Activated B cell treated with CpG ODN at 0.5 μM for 24 hours (primary cell): ENCODE measurements at regions of chr2 and their contacts with region 1.

Region 1: GRCh38 chr2:219177552-219178376 is at the start of gene RETREG2:
- DNase-seq: peak; percentile 78
- ATAC-seq: peak; percentile 45
- H3K4me3 Mint-ChIP-seq: peak within 1 kb of the TSS; percentile 96
- H3K27ac Mint-ChIP-seq: peak within 1 kb of the TSS; percentile 99
- H3K4me1 Mint-ChIP-seq: peaks cover 40% of the 10 kb centered on the region
- H3K27me3 Mint-ChIP-seq: no peaks in the 10 kb centered on the region
- CTCF ChIP-seq: no peak
- total RNA-seq, gene RETREG2: 60.5 and 78.6 TPM in 2 replicates

Region 2: DNA sequence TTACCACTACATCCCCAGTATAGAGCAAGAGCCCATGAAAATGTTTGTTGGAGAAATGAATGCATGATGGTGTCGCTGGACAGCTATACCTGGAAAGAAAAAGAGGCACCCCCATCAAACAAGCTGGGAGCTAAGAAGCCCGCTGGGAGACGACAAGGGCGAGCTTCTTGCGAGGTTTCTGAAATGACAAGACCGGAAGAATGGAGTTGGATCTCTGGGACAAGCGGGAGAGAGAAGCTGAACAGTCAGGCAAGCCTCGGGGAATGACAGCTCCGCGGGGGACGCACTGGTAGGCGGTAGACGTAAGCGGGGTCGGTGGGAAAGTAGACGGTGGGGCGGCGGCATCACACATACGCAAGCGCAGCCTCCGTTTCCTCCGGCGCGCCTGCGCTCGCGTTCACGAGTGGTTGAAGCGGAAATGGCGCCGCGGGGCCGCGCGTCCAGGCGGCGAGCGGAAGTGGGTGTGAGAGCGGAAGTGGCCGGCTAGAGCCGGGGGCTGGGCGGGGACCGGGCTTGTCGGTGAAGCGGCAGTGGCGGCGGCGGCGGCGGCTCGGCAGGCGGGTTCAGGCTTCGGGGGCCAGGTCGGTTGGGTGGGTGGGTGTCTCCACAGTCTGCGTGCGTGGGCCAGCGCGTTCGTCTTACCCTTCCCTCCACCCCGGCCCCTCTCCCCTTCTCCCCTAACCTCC is 960.9 kb before region 1 on chr2 and contains the start of gene ARPC2:
- CTCF ChIA-PET with region 1: no interaction called
- POLR2A ChIA-PET with region 1: interaction called, 4 read pairs
- intact Hi-C with region 1: loop called (anchors 5 kb)
- DNase-seq: peak; percentile 95
- ATAC-seq: peak; percentile 63
- H3K4me3 Mint-ChIP-seq: peak within 1 kb of the TSS; percentile 98
- H3K27ac Mint-ChIP-seq: peak within 1 kb of the TSS; percentile 99
- H3K4me1 Mint-ChIP-seq: peaks cover 45% of the 10 kb centered on the region
- H3K27me3 Mint-ChIP-seq: no peaks in the 10 kb centered on the region
- CTCF ChIP-seq: no peak
- total RNA-seq, gene ARPC2: 711 and 737 TPM in 2 replicates

Region 3: GRCh38 chr2:218659258-218659987 is 518.3 kb before region 1 on chr2 and contains the starts of genes BCS1L and ZNF142:
- CTCF ChIA-PET with region 1: no interaction called
- POLR2A ChIA-PET with region 1: no interaction called
- intact Hi-C with region 1: loop called (anchors 5 kb)
- DNase-seq: peak; percentile 85
- ATAC-seq: peak; percentile 96
- H3K4me3 Mint-ChIP-seq: peak within 1 kb of the TSS; percentile 99
- H3K27ac Mint-ChIP-seq: peak within 1 kb of the TSS; percentile 93
- H3K4me1 Mint-ChIP-seq: peaks cover 31% of the 10 kb centered on the region
- H3K27me3 Mint-ChIP-seq: no peaks in the 10 kb centered on the region
- CTCF ChIP-seq: no peak
- total RNA-seq, gene BCS1L: 66.9 and 75.1 TPM in 2 replicates
- total RNA-seq, gene ZNF142: 44.9 and 63.6 TPM in 2 replicates

Region 4: DNA sequence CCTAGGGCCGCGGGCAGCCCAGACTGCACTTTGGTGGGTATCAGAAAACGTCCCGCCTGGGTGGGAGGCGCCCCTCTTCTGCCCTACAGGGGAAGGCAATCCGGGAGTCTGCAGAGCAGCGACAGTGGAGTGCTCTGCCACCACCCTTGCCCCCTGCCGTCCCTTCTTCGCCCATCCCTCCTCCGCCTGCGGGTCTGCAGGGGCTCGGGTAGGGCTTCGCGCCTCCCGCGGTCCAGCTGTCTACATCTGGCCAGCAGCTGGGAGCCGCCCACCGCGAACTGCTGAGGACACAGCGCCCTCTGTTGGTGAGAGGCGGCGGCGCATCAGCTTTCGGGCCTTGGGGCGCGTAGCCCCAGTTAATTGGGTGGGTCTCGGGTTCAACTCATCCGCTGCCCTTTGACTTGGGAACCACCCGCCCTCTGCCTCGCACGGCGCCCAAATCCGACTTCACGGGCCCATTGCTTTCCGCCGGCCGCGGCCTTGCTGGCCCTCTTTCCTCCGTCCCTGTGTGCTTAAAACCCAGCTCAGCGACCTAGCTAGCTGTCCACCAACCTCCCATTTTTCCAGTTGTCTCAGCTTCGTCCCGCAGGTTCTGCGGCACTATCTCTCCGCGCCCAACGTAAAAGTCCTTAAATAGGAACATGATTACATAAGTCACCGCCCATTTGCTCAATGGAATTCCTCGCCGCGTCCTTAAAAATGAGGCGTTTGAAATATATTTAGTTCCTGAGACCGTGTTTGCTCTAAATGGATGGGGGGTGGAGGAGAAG is 279.5 kb before region 1 on chr2:
- CTCF ChIA-PET with region 1: no interaction called
- POLR2A ChIA-PET with region 1: interaction called, 9 read pairs
- intact Hi-C with region 1: loop called (anchors 1 kb)
- DNase-seq: peak; percentile 88
- ATAC-seq: peak; percentile 22
- H3K4me3 Mint-ChIP-seq: peak overlapping the region; percentile 85
- H3K27ac Mint-ChIP-seq: peak overlapping the region; percentile 84
- H3K4me1 Mint-ChIP-seq: peaks cover 47% of the 10 kb centered on the region
- H3K27me3 Mint-ChIP-seq: peaks cover 22% of the 10 kb centered on the region
- CTCF ChIP-seq: peak; percentile 97

Region 5: GRCh38 chr2:219229305-219230058 is 51.7 kb after region 1 on chr2 and contains the starts of genes ANKZF1 and ATG9A:
- CTCF ChIA-PET with region 1: interaction called, 3 read pairs
- POLR2A ChIA-PET with region 1: interaction called, 32 read pairs
- intact Hi-C with region 1: loop called (anchors 1 kb)
- DNase-seq: peak; percentile 90
- ATAC-seq: peak; percentile 97
- H3K4me3 Mint-ChIP-seq: peak within 1 kb of the TSS; percentile 96
- H3K27ac Mint-ChIP-seq: peak within 1 kb of the TSS; percentile 95
- H3K4me1 Mint-ChIP-seq: peaks cover 43% of the 10 kb centered on the region
- H3K27me3 Mint-ChIP-seq: no peaks in the 10 kb centered on the region
- CTCF ChIP-seq: no peak
- total RNA-seq, gene ANKZF1: 96.0 and 105 TPM in 2 replicates
- total RNA-seq, gene ATG9A: 28.3 and 38.3 TPM in 2 replicates

Region 6: GRCh38 chr2:219294356-219295351 is 116.9 kb after region 1 on chr2:
- CTCF ChIA-PET with region 1: interaction called, 33 read pairs
- POLR2A ChIA-PET with region 1: interaction called, 36 read pairs
- intact Hi-C with region 1: loop called (anchors 1 kb)
- DNase-seq: peak; percentile 91
- ATAC-seq: peak; percentile 95
- H3K4me3 Mint-ChIP-seq: peak overlapping the region; percentile 78
- H3K27ac Mint-ChIP-seq: peak overlapping the region; percentile 65
- H3K4me1 Mint-ChIP-seq: peaks cover 24% of the 10 kb centered on the region
- H3K27me3 Mint-ChIP-seq: peaks cover 6% of the 10 kb centered on the region
- CTCF ChIP-seq: peak; percentile 64

Region 7: DNA sequence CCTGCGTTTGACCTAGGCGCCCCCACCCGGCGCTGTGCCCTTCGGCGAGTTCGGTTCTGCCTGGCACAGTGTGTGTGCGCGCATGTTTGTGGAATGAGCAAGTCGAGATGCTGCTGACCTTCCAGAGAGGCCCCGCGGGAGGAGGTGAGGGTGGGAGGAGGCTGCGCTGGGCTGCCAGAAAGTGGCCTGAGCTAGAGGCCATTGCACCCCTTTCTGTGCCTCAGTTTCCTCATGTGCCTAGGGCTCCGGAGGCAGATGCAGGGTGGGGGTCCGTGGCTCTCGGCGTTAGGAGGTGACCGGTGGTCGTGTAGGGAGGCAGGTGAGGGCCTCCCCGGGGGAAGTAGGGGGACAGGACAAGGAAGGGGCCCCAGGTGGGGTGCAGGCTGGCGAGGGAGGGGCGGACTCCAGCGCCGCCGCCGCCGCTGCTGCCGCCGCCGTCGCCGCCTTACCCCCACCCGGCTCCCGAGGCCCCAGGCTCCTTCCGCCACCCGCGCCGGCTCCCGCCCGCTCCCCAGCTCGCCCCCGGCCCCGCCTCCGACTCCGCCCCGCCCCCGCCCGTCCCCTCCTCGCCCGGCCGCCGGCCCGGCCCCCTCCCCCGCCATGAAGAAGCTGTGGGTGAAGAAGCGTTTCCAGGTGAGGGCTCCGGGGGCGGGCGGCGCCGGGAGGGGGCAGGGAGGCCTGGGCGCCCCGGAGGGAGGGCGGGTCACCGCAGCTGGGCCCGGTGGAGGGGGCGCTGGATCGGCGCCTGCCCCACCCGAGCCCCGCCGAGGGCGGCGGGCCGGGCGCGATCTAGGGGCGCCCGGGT is 263.9 kb after region 1 on chr2:
- CTCF ChIA-PET with region 1: no interaction called
- POLR2A ChIA-PET with region 1: no interaction called
- intact Hi-C with region 1: no loop called
- DNase-seq: no peak
- ATAC-seq: peak; percentile 57
- H3K4me3 Mint-ChIP-seq: peak overlapping the region; percentile 79
- H3K27ac Mint-ChIP-seq: no peak overlapping the region
- H3K4me1 Mint-ChIP-seq: peaks cover 16% of the 10 kb centered on the region
- H3K27me3 Mint-ChIP-seq: peaks cover 49% of the 10 kb centered on the region
- CTCF ChIP-seq: no peak